Activated B cell treated with CpG ODN at 0.5 μM for 24 hours (primary cell): ENCODE measurements at regions of chr10 and their contacts with region 1.

Region 1: DNA sequence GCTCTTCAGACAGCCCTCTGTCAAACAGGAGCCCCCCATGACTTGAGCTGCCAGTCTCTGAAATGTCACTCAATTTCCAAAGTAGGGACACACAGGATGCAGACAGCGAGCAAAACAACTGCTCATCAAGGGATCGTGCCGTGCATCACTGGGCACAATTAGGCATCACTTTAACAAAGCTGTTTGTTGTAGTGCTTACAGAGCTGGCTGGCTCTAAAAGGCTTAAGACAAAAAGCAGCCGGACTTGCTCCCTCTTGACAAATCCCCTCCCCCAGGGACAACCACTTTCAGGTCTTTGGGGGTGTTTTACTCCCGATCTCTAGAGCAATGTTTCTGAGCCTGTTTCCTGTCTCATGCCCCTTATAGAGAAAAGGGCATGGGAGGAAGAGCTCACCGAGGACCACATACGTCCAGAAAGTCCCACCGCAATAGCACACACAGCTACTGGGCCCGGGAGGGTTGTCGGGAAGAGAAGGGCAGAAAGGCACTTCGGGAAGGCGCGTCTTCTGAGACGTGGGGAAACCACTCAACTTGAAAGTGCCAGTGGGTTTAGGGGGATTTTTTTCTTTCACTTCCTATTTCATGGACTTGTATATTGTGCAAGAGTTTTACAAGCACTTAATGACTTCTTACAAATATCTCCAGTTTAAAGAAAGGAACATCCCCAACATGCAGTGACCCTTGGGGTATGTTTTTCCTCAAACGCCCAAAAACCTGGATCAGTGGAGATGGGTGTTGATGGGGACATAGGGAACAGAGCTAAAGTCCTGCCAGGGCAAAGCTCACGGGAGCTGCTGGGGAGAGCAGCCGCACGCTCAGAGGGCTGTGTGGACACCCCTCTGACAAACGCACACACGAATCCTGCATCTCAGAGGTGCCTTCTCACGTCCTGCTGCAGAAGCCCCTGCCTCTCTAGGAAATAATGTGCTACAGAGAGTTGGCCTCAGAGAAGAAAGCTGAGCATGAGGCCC is 27.1 kb downstream of the LRRC20 start:
- DNase-seq: peak; percentile 36
- ATAC-seq: peak; percentile 78
- H3K4me3 Mint-ChIP-seq: peak overlapping the region; percentile 86
- H3K27ac Mint-ChIP-seq: peak overlapping the region; percentile 94
- H3K4me1 Mint-ChIP-seq: peaks cover 40% of the 10 kb centered on the region
- H3K27me3 Mint-ChIP-seq: no peaks in the 10 kb centered on the region
- CTCF ChIP-seq: no peak

Region 2: GRCh38 chr10:69988094-69988493 is 367.2 kb before region 1 on chr10:
- CTCF ChIA-PET with region 1: no interaction called
- POLR2A ChIA-PET with region 1: no interaction called
- intact Hi-C with region 1: no loop called
- DNase-seq: no peak
- ATAC-seq: no peak
- H3K4me3 Mint-ChIP-seq: no peak overlapping the region
- H3K27ac Mint-ChIP-seq: no peak overlapping the region
- H3K4me1 Mint-ChIP-seq: no peaks in the 10 kb centered on the region
- H3K27me3 Mint-ChIP-seq: peaks cover 14% of the 10 kb centered on the region
- CTCF ChIP-seq: no peak

Region 3: DNA sequence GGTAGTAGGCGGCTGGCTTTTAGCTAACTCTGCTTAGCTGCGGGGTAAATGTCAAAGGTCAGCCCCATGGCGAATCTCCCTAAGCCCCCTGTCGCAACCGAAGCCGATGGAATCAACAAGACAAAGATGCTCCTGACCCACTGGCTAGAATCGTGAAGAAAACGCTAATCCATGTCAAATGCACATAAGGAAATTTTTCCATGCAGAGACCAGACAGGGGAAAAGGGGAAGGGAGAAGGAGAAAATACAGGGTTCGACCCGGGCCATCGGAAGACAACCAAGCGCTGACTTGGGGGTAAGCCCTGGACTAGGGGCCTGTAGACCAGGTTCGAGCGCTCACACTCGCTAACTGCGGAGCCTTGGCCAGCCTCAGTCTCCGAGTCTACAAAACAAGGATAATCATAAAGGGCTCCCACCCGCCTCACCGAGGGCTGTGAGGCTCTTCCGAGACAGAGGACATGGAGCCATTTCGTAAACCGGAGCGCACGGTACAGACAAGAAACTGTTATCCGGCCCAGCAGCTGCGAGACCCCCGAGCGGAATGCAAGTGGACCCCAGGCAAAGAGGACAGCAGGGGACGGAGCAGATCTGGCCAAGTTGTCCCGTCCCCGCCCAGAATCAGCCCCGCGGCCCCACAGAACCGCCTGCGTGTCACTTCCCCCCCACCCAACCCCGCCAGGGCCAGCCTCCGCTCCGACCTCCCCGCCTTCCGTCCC is 185.5 kb before region 1 on chr10:
- CTCF ChIA-PET with region 1: no interaction called
- POLR2A ChIA-PET with region 1: interaction called, 11 read pairs
- intact Hi-C with region 1: no loop called
- DNase-seq: no peak
- ATAC-seq: peak; percentile 29
- H3K4me3 Mint-ChIP-seq: peak overlapping the region; percentile 94
- H3K27ac Mint-ChIP-seq: peak overlapping the region; percentile 93
- H3K4me1 Mint-ChIP-seq: peaks cover 43% of the 10 kb centered on the region
- H3K27me3 Mint-ChIP-seq: no peaks in the 10 kb centered on the region
- CTCF ChIP-seq: no peak

Region 4: GRCh38 chr10:70267161-70267933 is 88.0 kb before region 1 on chr10:
- CTCF ChIA-PET with region 1: interaction called, 204 read pairs
- POLR2A ChIA-PET with region 1: interaction called, 14 read pairs
- intact Hi-C with region 1: no loop called
- DNase-seq: no peak
- ATAC-seq: peak; percentile 31
- H3K4me3 Mint-ChIP-seq: no peak overlapping the region
- H3K27ac Mint-ChIP-seq: no peak overlapping the region
- H3K4me1 Mint-ChIP-seq: peaks cover 8% of the 10 kb centered on the region
- H3K27me3 Mint-ChIP-seq: peaks cover 13% of the 10 kb centered on the region
- CTCF ChIP-seq: no peak

Region 5: GRCh38 chr10:70272925-70273316 is 82.4 kb before region 1 on chr10:
- CTCF ChIA-PET with region 1: interaction called, 204 read pairs
- POLR2A ChIA-PET with region 1: interaction called, 14 read pairs
- intact Hi-C with region 1: loop called (anchors 1 kb)
- DNase-seq: no peak
- ATAC-seq: peak; percentile 86
- H3K4me3 Mint-ChIP-seq: peak overlapping the region; percentile 57
- H3K27ac Mint-ChIP-seq: peak overlapping the region; percentile 83
- H3K4me1 Mint-ChIP-seq: peaks cover 33% of the 10 kb centered on the region
- H3K27me3 Mint-ChIP-seq: no peaks in the 10 kb centered on the region
- CTCF ChIP-seq: no peak